Endothelial cell of umbilical vein (primary cell): ENCODE measurements at regions of chr2 and their contacts with region 1.

Region 1: DNA sequence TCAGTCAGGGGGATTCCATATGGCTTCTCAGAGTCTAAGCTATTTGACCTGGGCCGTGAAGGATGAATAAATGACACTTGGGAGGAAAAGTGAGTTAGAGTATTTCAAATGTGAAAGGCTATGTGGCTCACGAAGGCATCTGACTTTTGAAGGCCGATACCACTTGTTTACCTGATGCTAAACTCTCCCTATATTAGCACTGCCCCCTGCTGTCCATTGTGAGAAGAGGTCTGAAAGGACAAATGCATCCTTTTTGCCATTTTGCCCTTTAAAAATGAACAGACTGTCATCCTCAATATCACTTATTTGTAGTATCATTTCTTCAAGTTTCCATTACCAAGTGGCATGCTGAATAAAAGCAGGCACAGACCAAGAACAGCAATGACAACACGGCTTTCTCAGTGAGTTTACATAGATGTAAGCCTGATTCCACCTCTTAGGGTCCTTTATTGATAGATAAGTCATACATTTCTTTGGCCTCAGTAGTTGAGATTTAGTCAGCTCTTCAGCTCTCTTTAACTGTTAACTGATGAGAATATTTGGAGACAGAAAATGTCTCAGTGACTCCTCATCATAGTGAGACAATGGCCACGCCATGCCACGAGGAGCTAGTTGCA is 40.1 kb downstream of the DOCK10 start:
- DNase-seq: peak; percentile 70
- H3K4me3 ChIP-seq: no peak overlapping the region
- H3K27ac ChIP-seq: peak overlapping the region; percentile 25
- H3K4me1 ChIP-seq: peaks cover 4% of the 10 kb centered on the region
- H3K27me3 ChIP-seq: no peaks in the 10 kb centered on the region
- CTCF ChIP-seq: peak; percentile 72 to 80
- POLR2A ChIP-seq: no peak

Region 2: GRCh38 chr2:224650815-224651439 is 351.2 kb before region 1 on chr2:
- CTCF ChIA-PET with region 1: no interaction called
- POLR2A ChIA-PET with region 1: no interaction called
- dilution Hi-C with region 1: no loop called
- intact Hi-C with region 1: loop called (anchors 2 kb)
- DNase-seq: peak; percentile 61
- H3K4me3 ChIP-seq: no peak overlapping the region
- H3K27ac ChIP-seq: no peak overlapping the region
- H3K4me1 ChIP-seq: no peaks in the 10 kb centered on the region
- H3K27me3 ChIP-seq: no peaks in the 10 kb centered on the region
- CTCF ChIP-seq: peak; percentile 49 to 60
- POLR2A ChIP-seq: no peak

Region 3: DNA sequence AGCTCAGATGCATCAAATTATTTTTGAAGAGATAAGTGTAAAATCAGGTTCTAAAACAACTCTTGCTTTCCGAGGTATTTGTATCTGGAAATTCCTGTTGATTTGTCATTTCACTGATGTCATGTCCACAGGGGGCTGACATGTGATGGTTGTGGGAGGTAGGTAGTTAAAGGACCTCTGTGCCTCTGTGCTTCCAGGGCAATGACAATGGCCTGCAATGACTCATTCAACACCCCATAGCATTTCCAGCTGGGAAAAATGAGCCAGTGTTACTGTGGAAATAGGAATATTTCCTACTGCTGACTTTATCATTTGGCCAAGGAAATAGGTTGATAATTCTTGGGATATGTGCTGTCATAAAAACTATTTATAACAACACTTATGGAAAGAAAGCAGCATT is 199.7 kb before region 1 on chr2:
- CTCF ChIA-PET with region 1: interaction called, 9 read pairs
- POLR2A ChIA-PET with region 1: no interaction called
- dilution Hi-C with region 1: no loop called
- intact Hi-C with region 1: loop called (anchors 1 kb)
- DNase-seq: peak; percentile 69
- H3K4me3 ChIP-seq: no peak overlapping the region
- H3K27ac ChIP-seq: peak overlapping the region; percentile 83
- H3K4me1 ChIP-seq: peaks cover 13% of the 10 kb centered on the region
- H3K27me3 ChIP-seq: no peaks in the 10 kb centered on the region
- CTCF ChIP-seq: no peak
- POLR2A ChIP-seq: no peak

Region 4: GRCh38 chr2:224847961-224848850 is 153.9 kb before region 1 on chr2:
- CTCF ChIA-PET with region 1: interaction called, 10 read pairs
- POLR2A ChIA-PET with region 1: no interaction called
- dilution Hi-C with region 1: no loop called
- intact Hi-C with region 1: no loop called
- DNase-seq: peak; percentile 38
- H3K4me3 ChIP-seq: no peak overlapping the region
- H3K27ac ChIP-seq: no peak overlapping the region
- H3K4me1 ChIP-seq: no peaks in the 10 kb centered on the region
- H3K27me3 ChIP-seq: no peaks in the 10 kb centered on the region
- CTCF ChIP-seq: no peak
- POLR2A ChIP-seq: no peak

Region 5: DNA sequence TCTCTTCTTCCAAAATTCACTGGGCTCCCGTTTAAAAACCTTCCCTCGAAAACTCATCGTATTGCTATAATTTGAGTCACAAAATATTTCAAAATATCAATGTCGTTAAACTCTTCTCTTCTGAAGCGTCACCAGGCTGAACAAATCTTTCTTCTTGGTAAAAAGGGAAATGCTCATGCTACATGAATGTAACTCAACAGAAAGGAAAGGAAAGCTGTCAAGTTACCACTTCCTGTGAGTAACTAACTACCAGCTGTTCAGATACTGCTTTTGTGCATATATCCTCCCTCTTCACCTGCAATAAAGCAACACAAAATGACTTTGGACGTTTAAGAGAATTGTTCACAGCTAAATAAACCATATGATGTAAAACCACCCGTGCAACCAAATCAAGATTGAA is 55.3 kb before region 1 on chr2:
- CTCF ChIA-PET with region 1: interaction called, 5 read pairs
- POLR2A ChIA-PET with region 1: interaction called, 4 read pairs
- dilution Hi-C with region 1: no loop called
- intact Hi-C with region 1: loop called (anchors 1 kb)
- DNase-seq: peak; percentile 84
- H3K4me3 ChIP-seq: peak overlapping the region; percentile 13 to 95 (median 93)
- H3K27ac ChIP-seq: peak overlapping the region; percentile 99
- H3K4me1 ChIP-seq: peaks cover 61% of the 10 kb centered on the region
- H3K27me3 ChIP-seq: no peaks in the 10 kb centered on the region
- CTCF ChIP-seq: no peak
- POLR2A ChIP-seq: peak; percentile 71